ENCODE measurements at regions of chr19 and their contacts with region 1.

Region 1: DNA sequence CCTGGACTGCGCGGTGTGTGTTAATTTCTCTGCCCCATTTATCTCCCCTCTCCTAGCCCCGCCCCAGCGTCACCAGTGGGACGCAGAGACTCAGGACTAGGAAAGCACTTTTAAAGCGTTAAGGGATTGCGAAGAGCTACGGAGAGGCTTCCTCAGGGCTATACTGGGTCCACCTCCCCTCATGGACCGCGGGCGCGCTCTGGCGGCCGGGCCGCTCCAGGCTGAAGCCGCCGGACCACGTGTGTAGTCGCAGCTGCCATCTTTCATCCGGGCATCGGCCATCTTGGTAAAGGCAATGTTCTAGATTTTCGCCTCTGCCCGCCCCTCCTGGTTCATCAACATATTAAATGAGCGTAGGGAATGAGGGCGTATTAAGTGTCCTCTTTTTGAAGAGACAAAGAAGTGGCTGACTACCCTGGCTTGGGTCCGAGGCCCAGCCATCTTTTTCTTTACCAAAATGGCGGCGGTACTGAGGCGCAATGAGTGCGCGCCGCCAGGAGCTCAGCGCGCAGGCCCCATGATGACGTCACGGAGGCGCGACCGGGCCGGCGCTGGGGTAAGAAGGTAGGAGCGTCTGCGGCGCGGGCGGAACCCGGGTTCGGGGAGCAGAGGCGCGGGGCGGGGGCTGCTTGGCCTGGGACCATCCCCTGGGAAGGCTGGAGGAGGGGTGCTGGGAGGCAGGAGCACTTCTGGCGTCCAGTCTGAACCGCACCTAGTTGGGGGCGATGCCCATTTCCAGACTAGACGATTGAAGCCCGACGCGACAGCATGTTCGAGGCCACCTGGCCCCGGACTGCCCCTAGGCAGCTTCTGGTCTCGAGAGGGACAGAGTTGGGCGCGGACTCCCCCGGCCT is at the start of gene CCDC124:
- DNase-seq: peak; percentile 94

Region 2: DNA sequence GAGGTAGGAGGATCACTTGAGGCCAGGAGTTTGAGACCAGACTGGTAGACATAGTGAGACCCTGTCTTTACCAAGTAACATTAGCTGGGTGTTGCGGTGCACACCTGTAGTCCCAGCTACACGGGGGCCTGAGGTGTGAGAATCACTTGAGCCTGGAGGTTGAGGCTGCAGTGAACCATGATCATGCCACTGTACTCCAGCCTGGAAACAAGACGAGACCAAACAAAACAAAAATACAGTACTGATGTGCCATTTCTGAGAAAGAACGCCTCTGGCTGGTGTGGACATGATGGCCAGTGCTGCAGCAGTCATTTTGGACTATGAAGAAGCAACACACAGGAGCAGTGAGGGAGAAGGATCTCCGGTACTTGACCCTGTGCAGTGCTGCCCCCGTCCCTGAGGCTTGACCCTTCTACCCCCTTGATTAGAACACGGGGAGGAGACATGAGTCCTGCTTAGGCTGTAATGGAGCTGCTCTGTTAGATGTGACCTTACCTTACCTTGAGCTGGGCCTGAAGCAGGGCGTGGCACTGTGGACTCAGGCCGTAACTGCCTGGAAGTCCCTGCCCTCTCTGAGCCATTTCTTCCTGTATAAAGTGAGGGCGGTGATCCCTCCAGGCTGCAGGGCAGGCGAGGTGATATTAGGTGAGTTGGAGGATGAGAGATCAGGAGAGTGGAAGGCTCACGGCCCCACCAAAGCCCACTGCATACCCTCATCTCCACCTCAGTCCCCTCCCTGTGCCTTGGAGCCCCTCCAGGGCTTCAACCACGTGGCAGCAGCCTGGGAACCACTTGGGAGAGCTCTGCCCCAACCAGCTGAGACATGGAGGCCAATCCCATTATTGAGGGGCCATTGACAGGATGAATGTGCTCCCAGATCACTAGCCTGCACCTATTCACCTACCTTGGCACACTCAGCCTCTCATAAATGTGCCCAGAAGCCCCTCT is 67.1 kb before region 1 on chr19:
- CTCF ChIA-PET with region 1: interaction called, 13 read pairs
- POLR2A ChIA-PET with region 1: interaction called, 80 read pairs
- DNase-seq: no peak

Region 3: GRCh38 chr19:17871878-17872250 is 60.8 kb before region 1 on chr19 and contains the start of gene SLC5A5:
- CTCF ChIA-PET with region 1: interaction called, 13 read pairs
- POLR2A ChIA-PET with region 1: interaction called, 31 read pairs
- DNase-seq: no peak

Region 4: GRCh38 chr19:17922138-17922537 is 10.6 kb before region 1 on chr19:
- CTCF ChIA-PET with region 1: no interaction called
- POLR2A ChIA-PET with region 1: no interaction called
- DNase-seq: no peak

Region 5: DNA sequence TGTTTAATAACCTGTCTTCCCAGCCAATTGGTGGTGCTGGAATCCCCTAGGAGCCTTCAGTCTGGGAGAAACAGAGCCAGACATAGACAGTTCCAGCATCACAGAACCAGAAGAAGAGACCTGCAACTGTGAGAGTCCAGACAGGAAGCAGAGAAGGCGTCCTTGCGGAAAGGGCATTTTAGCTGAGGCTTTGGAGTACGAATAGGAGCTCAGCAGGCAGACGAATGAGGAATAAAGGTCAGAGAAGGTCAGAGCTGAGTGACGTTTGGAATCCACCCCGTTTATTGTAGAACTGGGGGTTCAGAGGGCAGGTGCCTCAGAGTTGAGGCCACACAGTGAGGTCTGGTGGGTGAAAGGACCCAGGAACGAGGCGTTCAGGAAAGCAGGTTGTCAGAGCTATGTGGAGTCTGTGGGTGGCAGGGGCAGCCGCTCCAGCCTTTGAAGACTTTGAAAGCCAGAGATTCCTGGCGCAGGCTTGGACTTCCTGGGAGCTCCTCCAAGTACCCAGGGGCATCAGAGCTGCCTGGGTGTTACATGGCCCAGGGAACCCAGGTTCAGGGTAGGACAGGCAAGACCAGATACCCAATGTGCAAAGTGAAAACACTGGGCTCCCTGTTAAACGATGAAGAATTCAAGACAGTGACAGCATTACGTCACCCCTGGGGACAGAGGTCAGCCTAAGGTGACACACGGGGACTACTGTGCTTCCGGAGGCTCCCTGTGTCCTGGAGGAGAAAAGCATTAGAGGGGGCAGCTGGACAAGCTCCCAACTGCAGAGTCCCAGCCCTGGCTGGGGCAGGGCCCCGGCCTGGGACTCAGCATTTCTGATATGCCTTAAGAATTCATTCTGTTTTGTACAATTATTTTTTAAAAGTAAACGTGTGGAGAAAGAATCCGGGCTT is 80.7 kb after region 1 on chr19:
- CTCF ChIA-PET with region 1: no interaction called
- POLR2A ChIA-PET with region 1: no interaction called
- DNase-seq: no peak

Measured in HEK293T (cell line).